ENCODE measurements at regions of chr9 and their contacts with region 1.

Region 1: DNA sequence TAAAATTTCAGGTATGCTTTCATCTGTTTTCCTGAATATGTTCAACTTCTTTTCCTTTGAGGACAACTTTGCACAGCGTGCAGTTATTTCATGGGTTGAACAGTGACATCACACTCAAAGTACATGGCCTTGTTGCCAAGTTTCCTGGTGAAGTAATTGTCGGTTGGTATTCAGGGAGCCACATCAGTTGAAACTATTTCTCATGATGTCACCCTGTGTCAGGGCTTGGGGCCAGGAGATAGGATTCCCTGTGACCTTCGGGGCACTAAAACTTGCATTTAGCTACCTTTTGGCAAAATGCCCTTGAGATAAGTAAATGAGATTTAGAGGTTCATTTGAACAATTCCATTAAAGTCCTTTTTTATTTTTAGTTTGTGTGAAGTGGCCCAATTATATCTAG is 383.9 kb downstream of the SH3GL2 start:
- DNase-seq: no peak
- H3K4me3 Mint-ChIP-seq: no peak overlapping the region
- H3K27ac Mint-ChIP-seq: no peak overlapping the region
- H3K4me1 Mint-ChIP-seq: no peaks in the 10 kb centered on the region
- H3K27me3 Mint-ChIP-seq: no peaks in the 10 kb centered on the region

Region 2: DNA sequence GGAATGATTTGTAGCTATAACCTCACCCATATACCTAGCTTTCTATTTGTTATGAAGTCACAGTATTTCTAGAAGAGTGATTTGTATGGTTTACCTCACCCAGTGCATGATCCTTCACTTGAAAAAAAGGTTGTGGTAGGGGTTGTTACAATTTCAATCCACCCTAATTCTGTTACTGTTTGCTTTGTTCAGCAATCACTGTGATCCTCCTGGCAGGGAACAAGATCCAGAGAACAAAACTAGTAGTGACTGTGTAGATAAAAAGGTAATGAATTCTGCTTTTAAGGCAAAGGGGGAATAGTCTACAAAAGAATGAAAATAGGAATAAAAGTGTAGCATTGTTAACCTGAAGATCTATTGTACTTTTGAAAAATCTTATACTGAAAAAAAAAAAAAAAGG is 575.2 kb before region 1 on chr9:
- intact Hi-C with region 1: no loop called
- DNase-seq: no peak
- H3K4me3 Mint-ChIP-seq: no peak overlapping the region
- H3K27ac Mint-ChIP-seq: no peak overlapping the region
- H3K4me1 Mint-ChIP-seq: no peaks in the 10 kb centered on the region
- H3K27me3 Mint-ChIP-seq: no peaks in the 10 kb centered on the region

Region 3: GRCh38 chr9:17519761-17520160 is 443.0 kb before region 1 on chr9:
- intact Hi-C with region 1: loop called (anchors 5 kb)
- DNase-seq: no peak
- H3K4me3 Mint-ChIP-seq: no peak overlapping the region
- H3K27ac Mint-ChIP-seq: no peak overlapping the region
- H3K4me1 Mint-ChIP-seq: no peaks in the 10 kb centered on the region
- H3K27me3 Mint-ChIP-seq: no peaks in the 10 kb centered on the region

Region 4: DNA sequence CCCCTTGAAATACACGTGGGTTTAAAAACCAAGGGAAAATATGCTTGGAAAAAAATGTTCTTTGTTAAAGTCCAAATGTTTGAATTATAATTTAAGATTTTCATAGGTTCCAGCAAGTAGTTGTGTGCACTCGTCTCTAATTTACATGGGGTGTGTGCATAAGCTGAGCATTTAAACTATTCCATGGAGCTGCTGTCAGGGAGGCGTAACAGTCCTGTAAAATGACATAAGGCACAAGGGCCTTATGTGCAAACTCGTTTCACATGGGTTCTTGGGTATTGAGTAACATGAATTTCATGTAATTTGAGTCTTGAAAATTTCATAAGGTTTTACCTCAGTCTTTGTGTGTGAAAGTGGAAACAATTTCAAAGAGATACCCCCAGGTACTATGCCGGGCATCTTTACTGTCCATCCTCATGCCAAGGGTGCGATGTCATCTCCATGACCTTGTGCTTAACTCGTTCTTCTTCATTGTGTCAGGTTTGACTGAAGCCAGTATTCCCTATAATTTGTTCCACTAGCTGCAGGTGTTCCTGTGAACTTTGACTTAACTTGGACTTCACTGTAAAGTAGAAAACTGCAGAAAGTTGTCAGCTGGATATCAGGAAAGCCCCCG is 24.6 kb before region 1 on chr9:
- intact Hi-C with region 1: no loop called
- DNase-seq: no peak
- H3K4me3 Mint-ChIP-seq: no peak overlapping the region
- H3K27ac Mint-ChIP-seq: no peak overlapping the region
- H3K4me1 Mint-ChIP-seq: no peaks in the 10 kb centered on the region
- H3K27me3 Mint-ChIP-seq: no peaks in the 10 kb centered on the region